ENCODE measurements at regions of chr12 and their contacts with region 1.

Region 1: DNA sequence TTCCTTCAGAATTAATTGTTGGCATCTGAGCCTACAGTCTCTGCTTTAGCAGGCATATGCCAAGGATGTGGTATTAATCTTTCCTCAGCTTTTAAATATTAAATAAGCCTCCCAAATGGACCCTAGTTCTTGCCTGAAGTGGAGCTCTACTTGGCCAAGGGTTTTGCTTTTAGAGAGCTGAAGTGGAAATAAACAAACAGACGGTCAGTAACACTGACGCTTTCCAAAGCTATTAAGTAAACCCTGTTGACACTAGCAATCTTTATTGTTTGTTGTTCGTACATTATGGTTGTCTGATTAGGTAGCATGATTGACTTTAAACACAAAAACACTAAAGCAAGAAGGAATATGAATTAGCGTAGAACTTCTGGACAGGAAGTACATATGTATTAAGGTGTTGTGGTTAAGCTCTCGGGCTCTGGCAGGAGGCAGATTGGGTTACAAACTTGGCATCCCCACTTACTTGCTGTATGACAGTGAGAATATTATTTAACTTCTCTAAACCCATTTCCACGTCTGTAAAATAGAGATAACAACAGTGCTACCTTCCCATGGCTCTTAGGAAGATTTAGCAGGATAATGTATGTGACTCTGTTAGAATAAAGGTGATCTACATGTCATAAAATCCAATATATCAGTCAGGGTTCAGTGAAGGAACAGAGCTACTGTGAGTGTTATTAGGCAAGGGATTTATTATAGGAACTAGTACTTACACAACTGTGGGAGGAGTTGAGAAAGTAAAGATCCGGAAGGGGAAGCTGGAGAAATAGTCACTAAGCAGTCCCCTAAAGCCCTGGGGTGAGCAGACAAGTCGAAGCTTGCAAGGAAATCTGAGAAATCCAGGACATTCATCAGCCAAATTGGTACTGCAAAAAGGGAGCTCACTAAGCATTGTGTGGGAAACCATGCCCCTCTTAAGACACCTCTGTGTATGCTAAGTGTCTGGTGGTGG is 92.2 kb upstream of the ATF7IP start:
- DNase-seq: peak; percentile 94
- H3K4me3 Mint-ChIP-seq: peak overlapping the region; percentile 4
- H3K27ac Mint-ChIP-seq: peak overlapping the region; percentile 86
- H3K4me1 Mint-ChIP-seq: peaks cover 14% of the 10 kb centered on the region
- H3K27me3 Mint-ChIP-seq: no peaks in the 10 kb centered on the region
- CTCF ChIP-seq: no peak

Region 2: DNA sequence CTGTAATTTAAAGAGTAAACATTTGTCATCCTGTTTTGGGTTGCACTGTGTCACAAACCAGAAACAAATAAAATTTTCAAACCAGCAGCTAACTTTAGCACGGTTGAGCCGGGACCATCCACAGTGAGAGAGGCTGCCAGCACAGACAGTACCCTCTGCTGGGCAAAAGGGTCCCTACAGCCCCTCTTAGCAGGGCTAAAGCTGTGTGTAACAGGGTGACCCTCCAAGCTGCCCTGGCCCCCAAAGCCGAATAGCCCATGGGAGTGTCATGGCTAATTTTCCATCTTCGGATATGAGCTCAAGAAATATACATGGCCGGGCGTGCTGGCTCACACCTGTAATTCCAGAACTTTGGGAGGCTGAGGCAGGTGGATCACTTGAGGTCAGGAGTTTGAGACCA is 134.7 kb before region 1 on chr12:
- CTCF ChIA-PET with region 1: no interaction called
- POLR2A ChIA-PET with region 1: no interaction called
- intact Hi-C with region 1: no loop called
- DNase-seq: peak; percentile 1
- H3K4me3 Mint-ChIP-seq: no peak overlapping the region
- H3K27ac Mint-ChIP-seq: no peak overlapping the region
- H3K4me1 Mint-ChIP-seq: no peaks in the 10 kb centered on the region
- H3K27me3 Mint-ChIP-seq: no peaks in the 10 kb centered on the region
- CTCF ChIP-seq: no peak

Region 3: DNA sequence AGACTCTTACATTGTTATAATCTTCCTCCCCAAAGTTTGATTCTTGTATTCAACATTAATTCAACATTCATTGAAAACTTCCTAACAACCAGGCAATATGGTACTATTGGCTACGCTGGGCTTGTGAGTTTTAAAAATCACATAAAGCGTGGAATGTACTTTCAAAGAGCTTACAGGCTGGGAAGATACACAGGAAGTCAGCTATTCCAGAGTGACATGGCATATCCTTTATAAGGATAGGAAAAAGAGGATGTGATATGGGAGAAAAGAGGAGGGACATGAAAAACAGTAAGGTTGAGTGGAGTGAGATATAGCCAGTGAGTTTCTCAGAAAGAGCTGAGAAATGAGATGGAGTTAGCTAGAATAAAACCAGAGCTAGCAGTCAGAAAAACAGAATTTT is 11.4 kb before region 1 on chr12:
- CTCF ChIA-PET with region 1: interaction called, 3 read pairs
- POLR2A ChIA-PET with region 1: interaction called, 18 read pairs
- intact Hi-C with region 1: no loop called
- DNase-seq: no peak
- H3K4me3 Mint-ChIP-seq: no peak overlapping the region
- H3K27ac Mint-ChIP-seq: no peak overlapping the region
- H3K4me1 Mint-ChIP-seq: peaks cover 17% of the 10 kb centered on the region
- H3K27me3 Mint-ChIP-seq: no peaks in the 10 kb centered on the region
- CTCF ChIP-seq: no peak

Region 4: GRCh38 chr12:14317371-14318146 is 44.3 kb after region 1 on chr12:
- CTCF ChIA-PET with region 1: no interaction called
- POLR2A ChIA-PET with region 1: interaction called, 10 read pairs
- intact Hi-C with region 1: no loop called
- DNase-seq: peak; percentile 73
- H3K4me3 Mint-ChIP-seq: no peak overlapping the region
- H3K27ac Mint-ChIP-seq: peak overlapping the region; percentile 90
- H3K4me1 Mint-ChIP-seq: no peaks in the 10 kb centered on the region
- H3K27me3 Mint-ChIP-seq: no peaks in the 10 kb centered on the region
- CTCF ChIP-seq: no peak

Region 5: DNA sequence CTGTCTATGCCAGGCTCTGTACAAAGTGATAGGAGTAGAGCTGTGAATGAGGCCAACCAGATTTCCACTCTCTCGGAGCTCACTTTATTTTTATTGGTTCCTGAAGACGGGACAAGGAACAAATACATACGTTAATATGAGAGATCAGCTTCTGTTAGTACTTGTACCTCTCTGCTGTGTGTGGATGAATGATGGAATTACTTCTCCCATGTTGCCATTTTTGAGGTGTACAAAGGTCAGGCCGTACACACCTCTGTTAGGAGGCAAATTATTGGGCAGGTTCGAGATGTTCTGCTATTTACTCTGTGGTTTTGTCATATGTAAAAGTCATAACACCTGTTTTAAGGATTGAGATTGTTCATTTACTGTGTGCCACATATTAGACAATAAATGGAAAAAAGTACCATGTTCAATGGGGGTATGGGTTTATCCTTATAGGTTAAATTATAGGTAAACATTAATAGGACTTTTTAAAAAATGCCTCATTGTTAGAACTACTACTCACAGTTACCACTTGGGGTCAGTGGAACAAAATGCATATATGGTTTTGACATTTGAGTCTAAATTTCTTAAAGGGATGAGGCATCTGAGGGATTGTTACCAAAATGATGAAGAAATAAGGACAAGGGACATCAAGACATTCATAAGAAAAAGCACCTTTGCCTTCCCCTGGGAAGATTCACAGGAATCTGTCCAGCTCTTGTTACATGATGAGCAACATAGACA is 503.2 kb after region 1 on chr12:
- CTCF ChIA-PET with region 1: no interaction called
- POLR2A ChIA-PET with region 1: no interaction called
- intact Hi-C with region 1: no loop called
- DNase-seq: peak; percentile 26
- H3K4me3 Mint-ChIP-seq: peak overlapping the region; percentile 97
- H3K27ac Mint-ChIP-seq: peak overlapping the region; percentile 99
- H3K4me1 Mint-ChIP-seq: peaks cover 17% of the 10 kb centered on the region
- H3K27me3 Mint-ChIP-seq: no peaks in the 10 kb centered on the region
- CTCF ChIP-seq: no peak